Heart left ventricle (tissue), 16 donors: ENCODE measurements at regions of chr17 and their contacts with region 1.

Region 1: GRCh38 chr17:77834170-77835115 is 124.1 kb upstream of the TNRC6C start:
- DNase-seq: peak; percentile 52 to 84 (median 82)
- ATAC-seq: peak in 3 of 4 donors; percentile 42 to 77 (median 68)
- H3K4me3 ChIP-seq: peak overlapping the region in 1 of 12 donors; percentile 24
- H3K27ac ChIP-seq: peak overlapping the region in 9 of 12 donors; percentile 8 to 70 (median 44)
- H3K4me1 ChIP-seq: peaks cover 13 to 69% (median 48%) of the 10 kb centered on the region in 12 donors
- H3K27me3 ChIP-seq: no peaks in the 10 kb centered on the region
- CTCF ChIP-seq: no peak
- POLR2A ChIP-seq: no peak

Region 2: GRCh38 chr17:77790143-77790829 is 44.2 kb before region 1 on chr17:
- intact Hi-C with region 1: no loop called
- DNase-seq: peak in 1 of 5 donors; percentile 11
- ATAC-seq: no peak
- H3K4me3 ChIP-seq: no peak overlapping the region
- H3K27ac ChIP-seq: no peak overlapping the region
- H3K4me1 ChIP-seq: no peaks in the 10 kb centered on the region
- H3K27me3 ChIP-seq: no peaks in the 10 kb centered on the region
- CTCF ChIP-seq: no peak
- POLR2A ChIP-seq: no peak

Region 3: DNA sequence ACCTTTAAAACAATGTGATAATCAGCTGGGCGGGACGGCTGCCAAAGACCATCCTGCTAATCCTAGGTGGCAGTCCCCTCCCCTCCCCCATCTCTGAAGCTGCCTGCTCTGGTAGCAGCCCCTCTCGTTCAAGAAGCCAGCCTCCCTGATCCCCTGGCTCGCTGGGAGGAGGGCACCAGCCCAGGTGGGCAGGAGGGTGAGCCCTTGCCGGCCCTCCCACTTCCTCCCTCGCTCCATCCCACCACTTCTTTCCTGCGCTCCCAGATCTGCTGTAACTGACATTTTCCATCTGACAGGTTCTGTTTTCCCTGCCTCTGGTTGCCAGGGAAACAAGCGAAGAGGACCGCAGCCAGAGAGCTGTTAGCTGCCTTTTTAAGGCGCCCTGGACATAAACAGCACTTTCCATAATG is 31.6 kb before region 1 on chr17:
- intact Hi-C with region 1: no loop called
- DNase-seq: peak in 3 of 5 donors; percentile 33 to 42 (median 35)
- ATAC-seq: peak in 3 of 4 donors; percentile 16 to 56 (median 32)
- H3K4me3 ChIP-seq: no peak overlapping the region
- H3K27ac ChIP-seq: no peak overlapping the region
- H3K4me1 ChIP-seq: peaks cover 0 to 15% (median 7%) of the 10 kb centered on the region in 12 donors
- H3K27me3 ChIP-seq: peaks cover 0 to 2% (median 0%) of the 10 kb centered on the region in 9 donors
- CTCF ChIP-seq: no peak
- POLR2A ChIP-seq: no peak

Region 4: DNA sequence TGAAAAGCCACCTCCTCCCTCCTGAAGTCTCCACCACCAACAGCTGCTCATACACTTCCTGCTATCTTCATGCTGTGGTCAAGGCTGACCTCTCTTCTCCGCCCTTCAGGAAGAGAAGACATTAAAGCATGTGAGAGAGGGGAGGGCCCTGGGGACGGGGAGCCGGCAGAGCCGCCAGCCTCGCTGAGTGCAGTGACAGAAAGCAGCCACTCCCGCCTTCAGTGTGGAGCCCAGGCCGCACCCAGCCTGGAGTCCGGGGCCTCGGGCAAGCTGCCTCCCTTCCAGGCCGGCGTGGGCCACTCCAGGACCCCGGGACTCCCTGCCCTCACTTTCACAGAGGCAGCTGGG is 29.3 kb after region 1 on chr17:
- intact Hi-C with region 1: loop called in 1 of 10 experiments (anchors 2 kb)
- DNase-seq: peak; percentile 64 to 78 (median 70)
- ATAC-seq: peak; percentile 38 to 79 (median 68)
- H3K4me3 ChIP-seq: peak overlapping the region in 7 of 12 donors; percentile 9 to 39 (median 20)
- H3K27ac ChIP-seq: peak overlapping the region in 9 of 12 donors; percentile 37 to 85 (median 56)
- H3K4me1 ChIP-seq: peaks cover 0 to 43% (median 21%) of the 10 kb centered on the region in 12 donors
- H3K27me3 ChIP-seq: no peaks in the 10 kb centered on the region
- CTCF ChIP-seq: no peak
- POLR2A ChIP-seq: no peak

Region 5: GRCh38 chr17:77875881-77876509 is 41.6 kb after region 1 on chr17:
- intact Hi-C with region 1: loop called in 3 of 10 experiments (anchors 2 to 5 kb)
- DNase-seq: peak in 2 of 5 donors; percentile 6 to 11
- ATAC-seq: no peak
- H3K4me3 ChIP-seq: no peak overlapping the region
- H3K27ac ChIP-seq: no peak overlapping the region
- H3K4me1 ChIP-seq: peaks cover 1 to 24% (median 9%) of the 10 kb centered on the region in 12 donors
- H3K27me3 ChIP-seq: no peaks in the 10 kb centered on the region
- CTCF ChIP-seq: no peak
- POLR2A ChIP-seq: no peak